ENCODE measurements at regions of chr19 and their contacts with region 1.

Region 1: GRCh38 chr19:52786457-52787359 is at the start of gene ZNF600:
- DNase-seq: peak; percentile 52
- H3K4me3 Mint-ChIP-seq: peak within 1 kb of the TSS; percentile 90
- H3K27ac Mint-ChIP-seq: peak within 1 kb of the TSS; percentile 75
- H3K4me1 Mint-ChIP-seq: peaks cover 26% of the 10 kb centered on the region
- H3K27me3 Mint-ChIP-seq: no peaks in the 10 kb centered on the region
- total RNA-seq, gene ZNF600: 11.9 and 13.4 TPM in 2 replicates

Region 2: DNA sequence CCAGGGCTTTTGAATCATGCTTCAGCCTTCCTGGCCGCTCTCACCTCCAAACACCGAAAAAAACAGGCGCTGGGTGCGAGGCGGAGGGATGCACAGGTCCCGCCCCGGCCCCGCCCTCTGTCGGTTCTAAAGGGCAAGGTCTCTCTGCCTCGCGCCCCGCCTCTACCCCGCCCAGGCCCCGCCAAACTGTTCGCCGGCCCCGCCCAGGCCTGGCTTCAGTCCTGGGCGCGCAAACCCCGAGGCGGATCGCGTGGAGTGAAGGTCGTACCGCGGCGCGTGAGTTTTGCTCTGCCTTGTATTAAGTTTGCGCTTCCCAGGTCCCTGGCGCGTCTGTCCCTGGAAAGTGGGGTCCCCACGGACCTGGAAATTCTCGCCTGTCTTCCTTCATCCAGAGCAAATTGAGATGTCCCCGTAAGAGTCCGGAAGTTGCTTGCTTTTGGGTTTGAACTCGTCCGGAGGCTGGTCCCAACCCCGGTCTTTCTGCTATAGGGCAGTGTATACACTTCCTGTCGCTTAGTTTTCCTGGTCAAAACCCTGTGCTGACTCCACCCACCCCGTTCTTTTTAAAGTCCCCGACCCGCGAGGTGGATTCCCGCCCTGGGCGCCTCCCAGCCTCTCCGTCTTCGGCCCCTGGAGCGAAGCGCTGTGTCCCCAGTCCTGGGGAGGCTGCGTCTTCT is 250.8 kb before region 1 on chr19:
- intact Hi-C with region 1: loop called (anchors 5 kb)
- DNase-seq: peak; percentile 80
- H3K4me3 Mint-ChIP-seq: peak overlapping the region; percentile 84
- H3K27ac Mint-ChIP-seq: peak overlapping the region; percentile 88
- H3K4me1 Mint-ChIP-seq: peaks cover 11% of the 10 kb centered on the region
- H3K27me3 Mint-ChIP-seq: no peaks in the 10 kb centered on the region

Region 3: GRCh38 chr19:52570000-52570861 is 216.5 kb before region 1 on chr19 and contains the start of gene ZNF701:
- intact Hi-C with region 1: loop called (anchors 1 kb)
- DNase-seq: peak; percentile 94
- H3K4me3 Mint-ChIP-seq: peak within 1 kb of the TSS; percentile 94
- H3K27ac Mint-ChIP-seq: peak within 1 kb of the TSS; percentile 94
- H3K4me1 Mint-ChIP-seq: peaks cover 20% of the 10 kb centered on the region
- H3K27me3 Mint-ChIP-seq: no peaks in the 10 kb centered on the region
- total RNA-seq, gene ZNF701: 16.0 and 18.3 TPM in 2 replicates

Region 4: DNA sequence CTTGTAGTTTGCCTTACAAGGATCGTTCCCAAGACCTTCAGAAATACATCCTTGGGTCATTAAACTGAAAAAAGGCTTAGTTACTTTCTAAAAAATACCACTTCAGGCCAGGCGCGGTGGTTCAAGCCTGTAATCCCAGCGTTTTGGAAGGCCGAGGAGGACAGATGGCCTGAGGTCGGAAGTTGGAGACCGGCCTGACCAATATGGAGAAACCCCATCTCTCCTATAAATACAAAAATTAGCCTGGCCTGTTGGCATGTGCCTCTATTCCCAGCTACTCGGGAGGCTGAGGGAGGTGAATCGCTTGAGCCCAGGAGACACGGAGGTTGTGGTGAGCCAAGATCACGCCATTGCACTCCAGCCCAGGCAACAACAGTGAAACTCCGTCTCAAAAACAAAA is 37.0 kb after region 1 on chr19:
- intact Hi-C with region 1: loop called (anchors 1 kb)
- DNase-seq: no peak
- H3K4me3 Mint-ChIP-seq: no peak overlapping the region
- H3K27ac Mint-ChIP-seq: no peak overlapping the region
- H3K4me1 Mint-ChIP-seq: peaks cover 9% of the 10 kb centered on the region
- H3K27me3 Mint-ChIP-seq: no peaks in the 10 kb centered on the region

Region 5: GRCh38 chr19:52922841-52923777 is 136.4 kb after region 1 on chr19 and contains the start of gene ZNF888:
- intact Hi-C with region 1: loop called (anchors 2 kb)
- DNase-seq: peak; percentile 77
- H3K4me3 Mint-ChIP-seq: peak within 1 kb of the TSS; percentile 93
- H3K27ac Mint-ChIP-seq: peak within 1 kb of the TSS; percentile 96
- H3K4me1 Mint-ChIP-seq: peaks cover 31% of the 10 kb centered on the region
- H3K27me3 Mint-ChIP-seq: no peaks in the 10 kb centered on the region
- total RNA-seq, gene ZNF888: 4.2 and 4.6 TPM in 2 replicates

Region 6: GRCh38 chr19:52942386-52943133 is 155.9 kb after region 1 on chr19:
- intact Hi-C with region 1: loop called (anchors 1 kb)
- DNase-seq: peak; percentile 94
- H3K4me3 Mint-ChIP-seq: peak overlapping the region; percentile 89
- H3K27ac Mint-ChIP-seq: peak overlapping the region; percentile 88
- H3K4me1 Mint-ChIP-seq: peaks cover 27% of the 10 kb centered on the region
- H3K27me3 Mint-ChIP-seq: peaks cover 2% of the 10 kb centered on the region

Region 7: GRCh38 chr19:52992749-52993322 is 206.1 kb after region 1 on chr19:
- intact Hi-C with region 1: no loop called
- DNase-seq: no peak
- H3K4me3 Mint-ChIP-seq: peak overlapping the region; percentile 77
- H3K27ac Mint-ChIP-seq: no peak overlapping the region
- H3K4me1 Mint-ChIP-seq: peaks cover 6% of the 10 kb centered on the region
- H3K27me3 Mint-ChIP-seq: peaks cover 4% of the 10 kb centered on the region